RWPE1 (cell line): ENCODE measurements at regions of chr1 and their contacts with region 1.

Region 1: DNA sequence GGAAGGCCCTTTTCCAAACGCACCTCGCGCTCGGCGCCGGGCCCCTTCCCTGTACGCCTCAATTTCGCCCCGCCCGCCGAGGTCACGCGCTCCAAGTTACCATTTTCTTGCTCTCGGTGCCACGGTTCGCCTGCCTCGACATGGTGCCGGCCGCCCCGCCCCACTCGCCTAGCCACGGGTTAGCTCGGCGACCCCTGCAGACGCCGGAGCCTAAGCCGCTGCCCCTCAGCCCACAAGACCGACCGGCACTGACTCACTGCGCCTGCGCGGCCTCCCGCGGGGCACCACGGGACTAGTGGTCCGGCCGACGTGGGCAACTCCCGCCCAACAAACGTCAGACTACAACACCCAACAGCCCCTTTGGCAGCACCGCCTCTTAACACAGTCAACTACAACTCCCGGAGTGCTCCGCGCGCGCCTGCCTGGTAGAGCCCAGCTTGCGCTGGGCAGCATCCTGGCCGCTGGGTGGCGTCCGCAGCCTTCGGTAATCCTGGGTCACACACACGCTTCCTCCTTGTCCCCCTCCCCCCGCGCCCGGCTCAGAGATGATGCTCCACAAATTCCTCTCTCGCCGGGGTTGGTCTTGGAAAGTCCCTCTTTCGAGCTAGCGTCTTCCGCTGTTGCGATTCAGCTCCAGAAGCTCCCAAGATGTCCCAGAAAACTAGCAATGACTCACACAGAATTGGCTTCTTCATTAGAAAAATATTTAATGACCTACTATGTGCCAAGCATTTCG is at the start of gene TRAPPC3:
- DNase-seq: peak; percentile 99
- H3K27ac ChIP-seq: peak within 1 kb of the TSS; percentile 99
- CTCF ChIP-seq: peak; percentile 95

Region 2: GRCh38 chr1:36099681-36100341 is 49.6 kb before region 1 on chr1:
- CTCF ChIA-PET with region 1: interaction called, 11 read pairs
- POLR2A ChIA-PET with region 1: interaction called, 3 read pairs
- DNase-seq: peak; percentile 76
- H3K27ac ChIP-seq: peak overlapping the region; percentile 38
- CTCF ChIP-seq: peak; percentile 86

Region 3: DNA sequence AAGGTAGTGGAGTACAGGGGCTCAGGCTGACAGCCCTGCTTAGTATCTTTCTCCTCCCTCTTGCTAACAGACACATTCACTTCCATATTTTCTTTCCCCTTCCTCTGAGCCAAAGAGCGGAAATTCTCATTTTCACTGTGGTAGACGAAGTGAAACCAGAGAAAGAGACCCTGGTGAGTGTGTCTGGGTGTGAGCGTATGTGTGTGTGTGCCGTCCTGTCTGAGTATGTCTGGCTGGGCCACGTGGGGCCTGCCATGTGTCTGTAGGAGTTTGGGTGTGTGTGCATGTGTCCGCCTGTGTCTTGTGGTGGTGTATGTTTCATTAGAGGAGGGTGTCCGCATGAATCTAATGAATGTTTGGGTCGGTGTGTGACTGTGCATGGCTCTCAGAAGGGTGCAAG is 26.0 kb before region 1 on chr1:
- CTCF ChIA-PET with region 1: no interaction called
- POLR2A ChIA-PET with region 1: no interaction called
- DNase-seq: no peak
- H3K27ac ChIP-seq: no peak overlapping the region
- CTCF ChIP-seq: no peak

Region 4: GRCh38 chr1:36187800-36188593 is 38.6 kb after region 1 on chr1:
- CTCF ChIA-PET with region 1: interaction called, 33 read pairs
- POLR2A ChIA-PET with region 1: interaction called, 7 read pairs
- DNase-seq: peak; percentile 84
- H3K27ac ChIP-seq: peak overlapping the region; percentile 89
- CTCF ChIP-seq: peak; percentile 89

Region 5: GRCh38 chr1:36285448-36286101 is 136.2 kb after region 1 on chr1:
- CTCF ChIA-PET with region 1: interaction called, 16 read pairs
- POLR2A ChIA-PET with region 1: no interaction called
- DNase-seq: peak; percentile 73
- H3K27ac ChIP-seq: no peak overlapping the region
- CTCF ChIP-seq: peak; percentile 75

Region 6: DNA sequence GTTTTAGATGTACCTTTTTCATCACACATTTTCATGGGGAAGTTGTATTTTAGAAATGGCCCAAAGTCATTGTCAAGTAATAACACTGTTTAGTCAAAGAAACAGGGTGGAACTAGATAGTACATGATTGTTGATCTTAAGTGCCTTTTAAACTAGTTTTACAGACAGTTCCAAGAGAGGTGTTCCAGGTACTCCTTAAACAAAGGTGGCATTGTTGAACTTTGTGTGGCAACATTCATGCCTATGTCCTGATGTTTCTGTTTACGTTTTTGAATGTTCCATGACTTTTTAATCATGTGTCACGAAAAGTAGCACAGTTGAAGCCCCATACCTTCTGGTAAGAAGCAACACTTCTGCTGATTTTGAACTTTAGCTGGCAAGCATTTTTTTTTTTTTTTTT is 147.7 kb after region 1 on chr1:
- CTCF ChIA-PET with region 1: no interaction called
- POLR2A ChIA-PET with region 1: no interaction called
- DNase-seq: no peak
- H3K27ac ChIP-seq: no peak overlapping the region
- CTCF ChIP-seq: no peak